Natural killer cell (primary cell): ENCODE measurements at regions of chr3 and their contacts with region 1.

Region 1: GRCh38 chr3:12891985-12892839 is 50.8 kb upstream of the RPL32 start:
- DNase-seq: peak in 1 of 2 donors; percentile 79
- ATAC-seq: peak; percentile 68 to 81 (median 72)
- H3K4me3 ChIP-seq: no peak overlapping the region
- H3K4me3 Mint-ChIP-seq: peak overlapping the region; percentile 4
- H3K27ac ChIP-seq: no peak overlapping the region
- H3K27ac Mint-ChIP-seq: peak overlapping the region in 1 of 2 donors; percentile 4
- H3K4me1 ChIP-seq: peaks cover 8% of the 10 kb centered on the region
- H3K4me1 Mint-ChIP-seq: peaks cover 16 to 17% of the 10 kb centered on the region in 2 donors
- H3K27me3 ChIP-seq: peaks cover 3% of the 10 kb centered on the region
- H3K27me3 Mint-ChIP-seq: peaks cover 24 to 29% of the 10 kb centered on the region in 2 donors
- CTCF ChIP-seq: peak; percentile 83

Region 2: GRCh38 chr3:12135029-12135657 is 757.1 kb before region 1 on chr3:
- intact Hi-C with region 1: loop called (anchors 10 kb)
- DNase-seq: peak; percentile 22 to 71
- ATAC-seq: peak; percentile 59 to 75 (median 74)
- H3K4me3 ChIP-seq: no peak overlapping the region
- H3K4me3 Mint-ChIP-seq: no peak overlapping the region
- H3K27ac ChIP-seq: no peak overlapping the region
- H3K27ac Mint-ChIP-seq: no peak overlapping the region
- H3K4me1 ChIP-seq: no peaks in the 10 kb centered on the region
- H3K4me1 Mint-ChIP-seq: no peaks in the 10 kb centered on the region
- H3K27me3 ChIP-seq: no peaks in the 10 kb centered on the region
- H3K27me3 Mint-ChIP-seq: peaks cover 16 to 17% of the 10 kb centered on the region in 2 donors
- CTCF ChIP-seq: peak; percentile 47

Region 3: GRCh38 chr3:12591997-12592715 is 300.1 kb before region 1 on chr3:
- intact Hi-C with region 1: no loop called
- DNase-seq: no peak
- ATAC-seq: no peak
- H3K4me3 ChIP-seq: no peak overlapping the region
- H3K4me3 Mint-ChIP-seq: no peak overlapping the region
- H3K27ac ChIP-seq: no peak overlapping the region
- H3K27ac Mint-ChIP-seq: peak overlapping the region; percentile 18 to 48
- H3K4me1 ChIP-seq: no peaks in the 10 kb centered on the region
- H3K4me1 Mint-ChIP-seq: peaks cover 0 to 5% of the 10 kb centered on the region in 2 donors
- H3K27me3 ChIP-seq: no peaks in the 10 kb centered on the region
- H3K27me3 Mint-ChIP-seq: no peaks in the 10 kb centered on the region
- CTCF ChIP-seq: no peak

Region 4: GRCh38 chr3:12785096-12785495 is 107.1 kb before region 1 on chr3:
- intact Hi-C with region 1: loop called (anchors 5 kb)
- DNase-seq: no peak
- ATAC-seq: no peak
- H3K4me3 ChIP-seq: no peak overlapping the region
- H3K4me3 Mint-ChIP-seq: no peak overlapping the region
- H3K27ac ChIP-seq: no peak overlapping the region
- H3K27ac Mint-ChIP-seq: no peak overlapping the region
- H3K4me1 ChIP-seq: no peaks in the 10 kb centered on the region
- H3K4me1 Mint-ChIP-seq: no peaks in the 10 kb centered on the region
- H3K27me3 ChIP-seq: peaks cover 3% of the 10 kb centered on the region
- H3K27me3 Mint-ChIP-seq: peaks cover 13 to 45% of the 10 kb centered on the region in 2 donors
- CTCF ChIP-seq: no peak

Region 5: DNA sequence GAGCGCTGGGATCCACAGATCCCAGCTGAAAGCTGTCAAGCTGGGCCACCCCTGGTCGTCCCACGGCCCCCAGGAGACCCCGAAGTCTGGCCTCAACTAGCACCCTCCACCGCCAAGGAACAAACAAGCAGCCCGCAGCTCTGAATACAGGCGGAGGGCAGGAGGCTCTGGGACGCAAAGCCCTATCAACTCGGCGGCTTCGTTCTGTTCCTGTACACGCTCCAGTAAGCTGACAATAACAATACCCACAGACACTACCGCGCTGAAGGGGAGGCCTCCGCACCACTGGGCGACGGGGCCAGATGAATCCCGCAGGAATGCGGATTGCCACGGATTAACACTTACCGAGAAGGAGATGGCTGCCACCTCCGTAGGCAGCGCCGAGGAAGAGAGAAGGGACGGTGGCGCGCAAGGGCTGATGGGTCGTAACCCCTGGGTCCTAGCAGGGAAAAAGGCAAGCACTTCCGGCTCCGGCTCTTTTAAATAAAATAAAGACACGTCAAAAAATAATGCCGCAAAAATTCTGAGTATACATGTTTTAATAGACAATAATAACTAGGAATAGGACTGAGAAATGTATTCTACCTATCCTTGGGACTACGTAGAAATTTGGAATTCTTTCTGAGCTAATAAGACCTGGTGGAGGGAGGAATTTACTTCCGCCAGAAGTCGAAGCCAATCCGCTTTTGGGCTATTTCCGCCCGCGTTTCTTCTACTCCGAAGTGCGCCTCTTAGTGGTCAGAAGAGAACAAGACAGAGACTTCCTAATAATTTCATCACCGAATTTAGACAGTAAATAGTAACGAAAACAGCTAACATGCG is 50.9 kb before region 1 on chr3 and contains the start of gene RPL32:
- intact Hi-C with region 1: loop called (anchors 1 kb)
- DNase-seq: peak; percentile 80 to 97
- ATAC-seq: peak; percentile 93 to 96 (median 93)
- H3K4me3 ChIP-seq: peak within 1 kb of the TSS; percentile 89
- H3K4me3 Mint-ChIP-seq: peak within 1 kb of the TSS; percentile 94
- H3K27ac ChIP-seq: peak within 1 kb of the TSS; percentile 94
- H3K27ac Mint-ChIP-seq: peak within 1 kb of the TSS; percentile 97 to 99
- H3K4me1 ChIP-seq: peaks cover 27% of the 10 kb centered on the region
- H3K4me1 Mint-ChIP-seq: peaks cover 49 to 53% of the 10 kb centered on the region in 2 donors
- H3K27me3 ChIP-seq: no peaks in the 10 kb centered on the region
- H3K27me3 Mint-ChIP-seq: no peaks in the 10 kb centered on the region
- CTCF ChIP-seq: peak; percentile 79
- total RNA-seq, gene RPL32: 1,034 to 1,328 (median 1,277) TPM

Region 6: DNA sequence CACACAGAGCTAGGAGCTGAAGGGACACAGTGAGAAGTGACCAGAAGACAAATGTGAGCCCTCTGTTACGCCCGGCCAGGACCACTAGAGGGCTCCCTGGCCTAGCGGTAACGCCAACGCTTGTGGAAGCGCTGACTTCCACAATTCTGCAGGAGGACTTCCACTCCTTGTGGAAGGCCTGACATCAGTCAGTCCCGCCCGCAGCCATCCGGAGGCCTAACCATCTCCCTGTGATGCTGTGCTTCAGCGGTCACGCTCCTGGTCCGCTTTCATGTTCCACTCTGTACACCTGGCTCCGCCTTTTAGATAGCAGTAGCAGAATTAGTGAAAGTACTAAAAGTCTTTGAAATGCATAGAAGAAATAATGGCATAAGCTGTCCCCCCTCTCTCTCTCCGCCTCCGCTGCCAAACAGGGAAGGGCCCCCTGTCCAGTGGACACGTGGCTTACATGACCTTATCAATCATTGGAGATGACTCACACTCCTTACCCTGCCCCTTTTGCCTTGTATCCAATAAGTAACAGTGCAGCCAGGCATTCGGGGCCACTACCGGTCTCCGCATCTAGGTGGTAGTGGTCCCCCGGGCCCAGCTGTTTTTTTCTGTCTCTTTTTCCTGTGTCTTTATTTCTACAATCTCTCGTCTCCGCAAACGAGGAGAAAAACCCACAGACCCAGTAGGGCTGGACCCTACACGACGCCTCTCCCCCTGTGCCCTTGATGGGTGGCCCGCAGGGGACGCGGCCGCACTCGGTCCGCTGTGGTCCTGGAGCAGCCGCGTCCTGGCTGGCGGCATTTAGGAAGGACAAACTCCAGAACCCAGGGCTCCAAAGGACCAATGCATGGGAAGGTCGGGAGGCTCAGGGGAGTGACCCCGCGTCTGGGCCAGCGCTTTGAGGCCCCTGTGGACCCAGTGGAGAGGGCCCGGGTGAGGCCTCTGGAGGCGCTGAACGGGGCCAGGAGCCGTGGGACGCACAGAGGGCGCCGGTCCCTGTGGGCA is 23.9 kb before region 1 on chr3:
- intact Hi-C with region 1: loop called (anchors 1 kb)
- DNase-seq: peak; percentile 57 to 76
- ATAC-seq: peak; percentile 76 to 84 (median 79)
- H3K4me3 ChIP-seq: peak overlapping the region; percentile 38
- H3K4me3 Mint-ChIP-seq: peak overlapping the region; percentile 90
- H3K27ac ChIP-seq: no peak overlapping the region
- H3K27ac Mint-ChIP-seq: peak overlapping the region; percentile 6 to 51
- H3K4me1 ChIP-seq: peaks cover 32% of the 10 kb centered on the region
- H3K4me1 Mint-ChIP-seq: peaks cover 18 to 29% of the 10 kb centered on the region in 2 donors
- H3K27me3 ChIP-seq: peaks cover 4% of the 10 kb centered on the region
- H3K27me3 Mint-ChIP-seq: peaks cover 9 to 14% of the 10 kb centered on the region in 2 donors
- CTCF ChIP-seq: peak; percentile 81

Region 7: GRCh38 chr3:12879191-12879815 is 12.9 kb before region 1 on chr3:
- intact Hi-C with region 1: no loop called
- DNase-seq: no peak
- ATAC-seq: no peak
- H3K4me3 ChIP-seq: no peak overlapping the region
- H3K4me3 Mint-ChIP-seq: no peak overlapping the region
- H3K27ac ChIP-seq: no peak overlapping the region
- H3K27ac Mint-ChIP-seq: no peak overlapping the region
- H3K4me1 ChIP-seq: peaks cover 6% of the 10 kb centered on the region
- H3K4me1 Mint-ChIP-seq: no peaks in the 10 kb centered on the region
- H3K27me3 ChIP-seq: no peaks in the 10 kb centered on the region
- H3K27me3 Mint-ChIP-seq: peaks cover 2 to 12% of the 10 kb centered on the region in 2 donors
- CTCF ChIP-seq: no peak